Ovary (tissue), 10 donors: ENCODE measurements at regions of chr9 and their contacts with region 1.

Region 1: GRCh38 chr9:121888438-121888775 is 204.7 kb downstream of the TTLL11 start:
- DNase-seq: peak in 2 of 5 donors; percentile 54 to 62
- H3K4me3 ChIP-seq: no peak overlapping the region
- H3K27ac ChIP-seq: peak overlapping the region in 1 of 2 donors; percentile 5
- H3K4me1 ChIP-seq: peaks cover 16% of the 10 kb centered on the region
- H3K27me3 ChIP-seq: no peaks in the 10 kb centered on the region
- CTCF ChIP-seq: no peak
- EP300 ChIP-seq: no peak
- POLR2A ChIP-seq: no peak

Region 2: GRCh38 chr9:121839726-121840500 is 48.5 kb before region 1 on chr9:
- intact Hi-C with region 1: loop called in 1 of 4 experiments (anchors 5 kb)
- DNase-seq: peak in 1 of 5 donors; percentile 5
- H3K4me3 ChIP-seq: no peak overlapping the region
- H3K27ac ChIP-seq: no peak overlapping the region
- H3K4me1 ChIP-seq: peaks cover 14% of the 10 kb centered on the region
- H3K27me3 ChIP-seq: no peaks in the 10 kb centered on the region
- CTCF ChIP-seq: no peak
- EP300 ChIP-seq: no peak
- POLR2A ChIP-seq: no peak